ENCODE measurements at regions of chr19 and their contacts with region 1.

Region 1: DNA sequence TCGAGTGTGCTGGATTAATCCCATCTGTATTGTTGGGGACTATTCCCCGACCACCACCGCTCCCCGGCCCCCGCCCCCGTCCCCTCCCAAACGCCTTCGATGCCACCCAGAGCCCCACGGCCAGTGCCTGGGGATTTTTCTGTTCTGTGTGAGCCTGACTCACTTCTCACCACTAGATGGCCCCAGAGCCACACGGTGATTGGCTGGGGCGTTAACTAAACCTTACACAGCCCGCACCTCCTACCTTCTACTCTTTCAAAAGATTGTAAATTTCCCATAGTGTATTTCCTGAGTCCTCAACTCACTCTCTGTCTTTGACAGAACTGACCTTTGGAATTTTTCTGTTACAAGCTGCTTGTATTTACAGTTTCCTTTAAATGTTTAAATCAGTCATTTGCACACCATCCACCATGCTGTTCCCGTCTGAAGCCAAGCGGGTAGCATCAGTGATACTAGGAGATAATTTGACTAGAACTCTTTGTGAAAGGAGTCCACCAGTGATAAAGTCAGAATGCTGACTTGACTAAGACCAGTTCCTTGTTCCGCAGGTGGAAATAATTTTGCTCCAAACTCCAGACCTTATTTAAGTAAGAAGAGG is 61.4 kb downstream of the RFX2 start:
- DNase-seq: peak; percentile 69 to 71
- ATAC-seq: peak; percentile 99
- H3K4me3 ChIP-seq: no peak overlapping the region
- H3K27ac ChIP-seq: 0 out of 6 replicates have a peak overlapping the region, but pooled peaks of 1 of the 2 experiments have one; percentile 20
- H3K4me1 ChIP-seq: peaks cover 7% of the 10 kb centered on the region
- CTCF ChIP-seq: peak; percentile 85
- EP300 ChIP-seq: no peak
- POLR2A ChIP-seq: no peak
- RAD21 ChIP-seq: peak; percentile 92 to 93

Region 2: DNA sequence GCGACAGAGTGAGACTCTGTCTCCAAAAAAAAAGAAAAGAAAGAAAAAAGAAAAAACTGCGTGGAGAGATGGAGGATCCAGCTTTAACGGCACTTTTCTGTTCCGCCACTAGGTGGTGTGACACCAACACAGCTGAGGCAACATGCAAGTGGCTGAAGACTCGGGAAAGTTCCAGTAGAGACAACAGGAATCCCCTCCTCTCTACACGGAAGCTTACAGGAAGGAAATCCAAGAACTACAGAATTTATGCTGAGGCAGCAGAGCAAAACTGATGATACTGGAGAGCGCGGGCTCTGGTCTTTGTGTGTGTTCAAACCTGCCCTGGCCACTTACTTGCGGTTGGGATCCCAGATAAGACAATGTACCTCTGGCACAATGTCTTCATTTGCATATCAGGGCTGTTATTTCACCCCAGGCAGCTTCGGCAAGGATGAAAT is 80.9 kb before region 1 on chr19:
- CTCF ChIA-PET with region 1: interaction called, 11 read pairs
- POLR2A ChIA-PET with region 1: no interaction called
- DNase-seq: peak; percentile 68 to 74
- ATAC-seq: peak; percentile 85 to 94
- H3K4me3 ChIP-seq: no peak overlapping the region
- H3K27ac ChIP-seq: peak overlapping the region in 1 of 2 experiments; percentile 52; a peak in 1 of 6 replicates
- H3K4me1 ChIP-seq: peaks cover 4% of the 10 kb centered on the region; the same call in 2 of the 3 replicates
- CTCF ChIP-seq: peak; percentile 63
- EP300 ChIP-seq: no peak
- POLR2A ChIP-seq: no peak
- RAD21 ChIP-seq: peak; percentile 25 to 27; a peak in 1 of 5 replicates

Region 3: DNA sequence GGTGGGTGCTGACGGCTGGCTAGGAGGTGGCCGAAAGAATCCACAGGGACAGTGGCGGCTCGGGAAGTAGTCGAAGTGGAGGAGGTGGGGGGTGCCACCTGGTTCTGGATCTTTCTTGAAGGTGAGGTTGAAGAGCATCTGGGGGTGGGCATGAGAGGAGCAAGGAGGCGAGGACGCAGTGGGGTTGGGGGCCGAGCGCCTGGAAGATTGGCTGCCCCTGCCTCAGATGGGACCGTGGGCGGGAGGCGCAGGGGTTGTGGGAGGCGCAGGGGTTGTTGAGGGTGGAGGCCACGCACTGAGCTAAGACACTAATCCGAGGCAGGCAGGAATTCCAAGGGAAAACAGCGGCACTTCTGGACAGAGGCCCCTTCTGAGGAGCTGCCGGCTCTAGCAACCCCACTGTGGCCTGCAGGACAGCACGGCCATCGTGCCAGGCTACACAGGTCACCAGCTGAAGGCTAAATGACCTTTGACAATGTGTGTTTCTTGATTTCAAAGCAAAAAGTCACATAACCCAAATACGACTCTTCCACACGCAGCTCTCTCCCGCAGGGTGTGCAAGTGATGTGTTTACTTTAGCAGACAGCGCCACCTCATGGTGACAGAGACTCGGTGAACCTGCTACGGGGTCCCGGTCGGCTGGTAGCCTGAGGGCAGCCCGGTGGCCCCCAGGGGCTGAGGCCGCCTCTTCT is 26.9 kb before region 1 on chr19:
- CTCF ChIA-PET with region 1: interaction called, 13 read pairs
- POLR2A ChIA-PET with region 1: no interaction called
- DNase-seq: peak; percentile 55 to 66
- ATAC-seq: peak; percentile 83 to 96
- H3K4me3 ChIP-seq: no peak overlapping the region
- H3K27ac ChIP-seq: no peak overlapping the region
- H3K4me1 ChIP-seq: no peaks in the 10 kb centered on the region
- CTCF ChIP-seq: peak; percentile 55
- EP300 ChIP-seq: no peak
- POLR2A ChIP-seq: no peak
- RAD21 ChIP-seq: peak; percentile 50 to 65

Region 4: DNA sequence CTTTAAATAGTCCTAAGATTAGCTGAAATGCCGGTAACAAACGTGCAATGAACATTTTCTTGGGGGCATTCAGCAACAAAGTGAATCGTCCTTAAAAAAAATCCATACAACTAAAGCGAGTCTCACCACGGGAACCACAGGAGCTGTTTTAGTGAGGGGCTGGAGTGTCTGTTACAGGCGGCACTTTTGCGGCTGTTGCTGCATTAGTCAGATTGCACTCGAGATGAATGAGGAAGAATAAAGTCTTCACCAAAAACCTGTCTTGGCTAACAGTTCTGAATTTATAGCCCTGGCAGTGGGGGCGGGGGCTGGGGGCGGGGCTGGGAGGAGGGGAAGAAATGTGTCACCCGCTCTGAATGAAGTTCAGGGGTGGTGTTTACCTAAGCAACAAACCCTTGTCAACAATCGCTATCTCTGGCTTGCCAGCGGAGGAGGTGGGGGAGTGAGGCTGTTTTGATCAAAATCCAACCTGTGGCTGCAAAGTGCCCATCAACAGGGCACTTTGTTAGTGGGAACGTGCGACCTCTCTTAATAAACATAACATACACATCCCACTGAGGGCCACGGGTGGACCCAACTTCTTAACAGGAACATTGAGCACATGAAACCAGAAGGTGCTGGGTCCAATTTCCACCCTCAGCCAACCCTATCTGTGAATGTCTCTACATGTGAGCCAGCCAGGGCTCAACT is 16.9 kb after region 1 on chr19:
- CTCF ChIA-PET with region 1: interaction called, 11 read pairs
- POLR2A ChIA-PET with region 1: no interaction called
- DNase-seq: peak; percentile 66 to 85
- ATAC-seq: peak; percentile 47 to 67
- H3K4me3 ChIP-seq: 0 out of 3 replicates have a peak overlapping the region, but pooled peaks have one; percentile 10
- H3K27ac ChIP-seq: peak overlapping the region; percentile 68 to 78
- H3K4me1 ChIP-seq: peaks cover 59% of the 10 kb centered on the region
- CTCF ChIP-seq: no peak
- EP300 ChIP-seq: no peak
- POLR2A ChIP-seq: no peak
- RAD21 ChIP-seq: no peak

Region 5: GRCh38 chr19:6115992-6116391 is 67.1 kb after region 1 on chr19:
- CTCF ChIA-PET with region 1: interaction called, 10 read pairs
- POLR2A ChIA-PET with region 1: no interaction called
- DNase-seq: no peak
- ATAC-seq: no peak
- H3K4me3 ChIP-seq: no peak overlapping the region
- H3K27ac ChIP-seq: no peak overlapping the region
- H3K4me1 ChIP-seq: no peaks in the 10 kb centered on the region
- CTCF ChIP-seq: no peak
- EP300 ChIP-seq: no peak
- POLR2A ChIP-seq: no peak
- RAD21 ChIP-seq: no peak

Measured in A549 (cell line).